ENCODE measurements at regions of chr11 and their contacts with region 1.

Region 1: DNA sequence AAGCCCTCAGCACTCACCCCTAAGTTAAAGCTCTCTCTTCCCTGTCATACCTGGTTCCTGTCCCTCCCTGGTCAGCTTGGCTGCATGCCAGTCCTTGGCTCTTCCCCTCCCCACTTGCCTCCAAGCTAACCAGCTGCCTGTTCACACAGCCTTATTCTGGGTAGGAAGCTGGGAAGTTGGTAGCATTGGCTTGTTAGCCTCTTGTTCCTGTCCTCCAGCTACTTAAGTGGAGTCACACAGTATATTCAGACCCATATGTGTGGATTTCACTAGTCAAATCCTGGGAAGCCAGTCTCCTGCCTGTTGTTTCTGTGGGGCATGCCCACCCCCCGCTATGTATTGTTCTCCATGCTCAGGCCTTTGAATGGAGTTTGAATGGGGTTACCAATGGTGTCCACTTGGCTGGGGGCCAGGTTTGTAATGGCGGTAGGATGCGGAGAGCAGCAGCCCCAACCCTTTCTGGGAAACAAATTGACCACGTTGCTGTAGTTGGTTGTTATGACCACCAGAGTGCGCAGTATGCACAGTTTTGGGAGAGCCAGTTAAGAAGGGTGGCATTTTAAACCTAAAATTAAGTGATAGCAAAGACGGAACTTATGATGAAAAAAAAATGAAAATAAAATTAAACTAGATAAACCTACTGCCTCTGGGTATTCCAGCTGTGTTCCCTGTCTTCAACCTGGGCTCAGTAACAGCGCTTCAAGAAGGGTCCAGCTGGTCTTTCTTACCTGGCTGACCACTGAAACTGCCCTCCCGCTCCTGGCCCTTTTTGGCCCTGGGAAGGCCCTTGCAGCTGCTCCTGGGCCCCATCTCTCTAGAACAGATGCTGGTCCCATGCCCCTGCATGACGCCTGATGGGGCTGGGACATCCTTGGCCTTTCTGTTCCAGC is 10.7 kb upstream of the RPS3 start:
- DNase-seq: peak; percentile 81 to 93 (median 89)
- H3K4me3 ChIP-seq: peak overlapping the region in 1 of 7 experiments; percentile 52
- H3K27ac ChIP-seq: no peak overlapping the region
- H3K4me1 ChIP-seq: peaks cover under 1 to 18% (median 17%) of the 10 kb centered on the region in 4 experiments
- H3K27me3 ChIP-seq: no peaks in the 10 kb centered on the region

Region 2: DNA sequence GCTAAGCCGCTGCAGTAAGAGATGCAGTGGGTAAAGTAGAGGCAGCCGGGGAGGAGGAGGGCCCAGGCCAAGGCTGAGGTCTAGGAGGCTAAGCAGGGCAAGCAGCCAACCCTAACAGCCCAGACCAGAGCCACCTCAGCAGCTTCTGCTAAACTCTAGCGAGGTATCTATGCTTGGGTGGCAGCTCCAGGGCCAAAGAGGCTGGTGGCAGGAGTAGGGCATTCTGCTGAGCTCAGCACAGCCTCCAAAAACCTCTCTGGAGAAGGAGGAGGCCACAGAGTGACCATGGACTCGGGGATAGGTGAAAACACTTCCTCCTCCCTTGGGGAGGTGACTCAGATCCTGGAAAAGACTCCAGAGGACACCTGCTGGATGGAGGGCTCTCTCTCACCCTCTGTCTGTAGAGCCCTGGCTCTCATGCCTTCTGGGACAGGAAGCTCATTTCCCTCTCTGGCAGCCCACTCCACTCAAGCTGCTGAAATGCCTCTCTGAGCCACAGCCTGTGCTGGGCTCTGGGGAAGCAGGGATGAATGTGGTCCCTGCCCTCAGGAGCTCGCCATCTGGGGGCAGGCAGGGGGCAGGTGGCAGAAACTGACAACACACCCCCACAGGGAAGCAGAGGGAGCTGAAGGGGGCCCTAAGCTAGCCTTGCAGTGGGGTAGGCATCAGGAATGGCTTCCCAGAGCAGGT is 164.5 kb before region 1 on chr11:
- CTCF ChIA-PET with region 1: no interaction called
- POLR2A ChIA-PET with region 1: no interaction called
- DNase-seq: no peak
- H3K4me3 ChIP-seq: no peak overlapping the region
- H3K27ac ChIP-seq: no peak overlapping the region
- H3K4me1 ChIP-seq: peaks cover 0 to 2% (median 0%) of the 10 kb centered on the region in 4 experiments
- H3K27me3 ChIP-seq: peaks cover 0 to 3% (median 0%) of the 10 kb centered on the region in 5 experiments

Region 3: DNA sequence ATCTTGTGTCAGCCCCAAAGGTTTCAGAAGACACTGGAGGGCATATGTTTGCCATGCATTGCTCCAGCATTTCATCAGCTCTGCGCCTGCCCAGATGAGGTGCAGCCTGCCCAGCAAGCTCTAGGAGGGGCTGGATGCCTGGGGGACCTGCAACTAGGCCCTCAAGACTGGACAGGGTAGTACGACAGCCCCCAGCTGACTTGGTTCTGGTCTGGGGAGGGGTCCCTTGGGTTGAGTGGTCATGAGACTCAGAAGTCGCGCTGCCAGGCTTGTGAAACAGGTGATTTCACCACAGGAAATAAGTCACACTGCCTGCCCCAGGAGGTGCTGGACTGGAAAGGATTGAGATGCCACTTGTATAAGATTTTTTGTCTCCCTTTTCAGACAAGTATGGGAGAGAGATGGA is 124.7 kb before region 1 on chr11:
- CTCF ChIA-PET with region 1: no interaction called
- POLR2A ChIA-PET with region 1: no interaction called
- DNase-seq: peak in 2 of 3 donors; percentile 41 to 53
- H3K4me3 ChIP-seq: no peak overlapping the region
- H3K27ac ChIP-seq: peak overlapping the region in 1 of 2 experiments; percentile 6
- H3K4me1 ChIP-seq: peaks cover 8 to 46% (median 41%) of the 10 kb centered on the region in 4 experiments
- H3K27me3 ChIP-seq: no peaks in the 10 kb centered on the region

Region 4: DNA sequence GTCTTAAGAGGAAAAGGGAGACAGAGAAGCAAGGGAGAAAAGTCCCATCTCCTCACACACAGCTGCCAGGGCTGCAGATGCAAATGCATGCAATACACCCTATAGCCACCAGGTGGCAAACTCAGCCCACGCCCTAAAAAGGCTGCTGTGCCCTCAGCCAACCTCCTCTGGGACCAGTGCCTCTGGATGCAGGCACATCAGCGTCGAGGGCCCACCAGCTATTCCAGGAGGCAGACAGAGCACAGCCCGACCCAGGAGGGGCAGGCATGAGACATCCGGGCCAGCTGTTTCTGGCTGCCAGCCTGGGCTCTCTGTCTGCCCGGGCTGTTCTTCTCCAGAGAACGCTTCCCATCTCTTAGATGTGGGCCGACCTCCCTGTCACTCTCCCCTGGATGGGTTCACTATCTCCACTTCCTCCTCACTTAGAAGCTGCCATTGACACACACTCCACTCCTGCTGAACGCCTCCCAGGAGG is 108.4 kb before region 1 on chr11:
- CTCF ChIA-PET with region 1: interaction called, 265 read pairs
- POLR2A ChIA-PET with region 1: no interaction called
- DNase-seq: peak; percentile 70 to 85 (median 80)
- H3K4me3 ChIP-seq: no peak overlapping the region
- H3K27ac ChIP-seq: no peak overlapping the region
- H3K4me1 ChIP-seq: peaks cover 16 to 35% (median 32%) of the 10 kb centered on the region in 4 experiments
- H3K27me3 ChIP-seq: no peaks in the 10 kb centered on the region

Region 5: GRCh38 chr11:75313513-75314272 is 74.9 kb before region 1 on chr11:
- CTCF ChIA-PET with region 1: interaction called, 12 read pairs
- POLR2A ChIA-PET with region 1: no interaction called
- DNase-seq: no peak
- H3K4me3 ChIP-seq: no peak overlapping the region
- H3K27ac ChIP-seq: peak overlapping the region in 1 of 2 experiments; percentile 54
- H3K4me1 ChIP-seq: peaks cover 3 to 31% (median 19%) of the 10 kb centered on the region in 4 experiments
- H3K27me3 ChIP-seq: no peaks in the 10 kb centered on the region

Region 6: DNA sequence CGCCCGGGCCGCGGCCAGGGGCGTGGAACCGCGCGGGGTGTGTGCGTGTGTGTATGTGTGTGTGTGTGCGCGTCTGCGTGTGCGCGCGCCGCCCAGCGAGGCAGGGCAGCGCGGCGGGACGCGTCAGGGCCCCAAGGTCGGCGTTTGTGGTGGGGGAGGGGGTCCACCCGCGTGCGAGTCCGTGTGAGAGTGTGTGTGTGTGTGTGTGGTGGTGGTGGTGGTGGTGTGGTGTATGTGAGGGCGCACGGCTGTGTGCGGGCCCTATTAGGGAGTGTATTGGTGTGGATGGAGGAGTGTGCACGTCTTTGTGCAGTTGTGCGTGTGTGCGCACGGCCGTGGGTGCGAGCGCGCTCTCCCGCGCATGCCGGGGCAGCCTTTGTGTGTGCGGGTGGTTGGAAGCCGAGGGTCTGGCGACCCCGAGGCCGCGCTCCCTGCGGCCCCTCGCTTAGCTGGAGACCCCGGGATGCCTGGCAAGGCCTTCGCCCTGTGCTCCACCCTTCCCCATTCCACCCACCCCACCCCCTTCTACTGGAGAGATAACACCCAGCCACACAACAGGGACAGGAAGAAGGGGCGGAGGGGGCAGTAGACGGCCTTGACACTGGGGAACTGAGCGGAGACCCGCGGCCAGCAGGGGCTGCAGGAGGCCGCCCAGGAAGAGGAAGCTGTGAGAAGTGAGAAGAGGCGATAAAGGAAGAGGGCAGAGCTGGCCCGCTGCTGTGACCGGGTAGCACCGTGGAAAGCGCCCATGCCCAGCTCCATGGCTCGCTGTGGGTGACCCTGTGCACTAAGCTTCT is 36.6 kb before region 1 on chr11:
- CTCF ChIA-PET with region 1: interaction called, 137 read pairs
- POLR2A ChIA-PET with region 1: no interaction called
- DNase-seq: peak; percentile 83 to 93 (median 88)
- H3K4me3 ChIP-seq: peak overlapping the region; percentile 65 to 93 (median 81)
- H3K27ac ChIP-seq: peak overlapping the region; percentile 40 to 77
- H3K4me1 ChIP-seq: peaks cover 11 to 67% (median 60%) of the 10 kb centered on the region in 4 experiments
- H3K27me3 ChIP-seq: no peaks in the 10 kb centered on the region

Region 7: GRCh38 chr11:75399344-75400145 is 10.9 kb after region 1 on chr11 and contains the start of gene RPS3:
- CTCF ChIA-PET with region 1: interaction called, 32 read pairs
- POLR2A ChIA-PET with region 1: no interaction called
- DNase-seq: peak; percentile 90 to 95 (median 93)
- H3K4me3 ChIP-seq: peak within 1 kb of the TSS; percentile 65 to 99 (median 96)
- H3K27ac ChIP-seq: peak within 1 kb of the TSS; percentile 93 to 96
- H3K4me1 ChIP-seq: peaks cover 17 to 43% (median 37%) of the 10 kb centered on the region in 4 experiments
- H3K27me3 ChIP-seq: no peaks in the 10 kb centered on the region

Region 8: DNA sequence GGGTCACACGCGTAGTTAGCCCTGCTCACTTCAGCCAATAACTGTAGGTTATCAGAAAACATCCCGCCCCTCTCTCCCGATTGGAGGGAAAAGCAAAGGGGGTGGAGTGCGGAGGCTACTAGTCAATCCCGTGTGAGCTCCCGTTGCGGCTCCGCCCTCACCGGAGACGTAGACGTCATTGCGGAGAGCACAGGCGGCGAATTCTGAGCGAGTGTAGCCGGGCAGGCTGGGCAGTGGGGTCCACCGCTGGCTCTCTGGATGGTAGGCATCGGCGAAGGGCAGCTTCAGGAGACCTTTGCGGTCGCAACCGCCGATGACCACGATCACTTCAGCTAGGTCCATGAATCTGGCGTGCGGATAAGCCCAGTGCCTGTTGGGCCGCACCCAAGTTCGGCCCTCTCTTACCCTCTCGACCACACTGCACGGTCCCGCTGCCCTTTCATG is 39.7 kb after region 1 on chr11:
- CTCF ChIA-PET with region 1: interaction called, 11 read pairs
- POLR2A ChIA-PET with region 1: no interaction called
- DNase-seq: peak; percentile 74 to 91 (median 91)
- H3K4me3 ChIP-seq: peak overlapping the region in 2 of 7 experiments; percentile 44 to 64
- H3K27ac ChIP-seq: no peak overlapping the region
- H3K4me1 ChIP-seq: peaks cover 0 to 27% (median 13%) of the 10 kb centered on the region in 4 experiments
- H3K27me3 ChIP-seq: peaks cover 4 to 67% (median 34%) of the 10 kb centered on the region in 5 experiments

Measured in common myeloid progenitor, CD34-positive (primary cell).